ENCODE measurements at regions of chr4 and their contacts with region 1.

Region 1: GRCh38 chr4:182806259-182807252 is 110.6 kb downstream of the DCTD start:
- DNase-seq: peak; percentile 73
- H3K4me3 ChIP-seq: peak overlapping the region; percentile 18
- H3K27ac ChIP-seq: no peak overlapping the region
- H3K4me1 ChIP-seq: no peaks in the 10 kb centered on the region
- H3K27me3 ChIP-seq: no peaks in the 10 kb centered on the region
- CTCF ChIP-seq: peak; percentile 93

Region 2: DNA sequence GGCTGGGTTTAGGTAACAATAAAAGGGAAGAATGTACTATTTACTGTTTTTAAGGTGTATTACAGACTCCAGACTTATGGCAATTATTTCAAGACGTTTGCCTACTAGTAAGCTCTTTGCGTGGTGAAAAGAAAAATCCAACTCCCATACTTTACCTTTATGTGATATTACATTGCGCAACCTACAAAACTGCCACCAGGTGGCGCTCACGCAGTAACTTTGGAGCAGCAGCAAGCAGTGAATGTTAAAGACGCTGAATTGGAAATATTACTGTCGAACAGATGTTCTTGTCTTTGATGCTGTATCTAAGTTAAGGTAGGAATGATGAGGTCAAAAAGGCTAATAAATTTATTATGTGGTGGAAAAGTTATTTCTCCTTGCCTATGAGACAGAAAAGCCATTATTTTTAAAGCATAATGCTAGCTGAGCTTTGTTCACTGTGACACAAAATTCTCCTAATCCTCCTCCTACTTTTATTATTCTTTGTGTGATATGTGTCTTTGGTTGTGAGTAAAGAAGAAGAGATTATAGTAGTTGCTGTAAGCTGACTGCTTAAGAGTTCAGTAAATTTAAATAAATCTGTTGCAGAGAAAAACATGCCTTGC is 1663.2 kb before region 1 on chr4:
- CTCF ChIA-PET with region 1: no interaction called
- POLR2A ChIA-PET with region 1: no interaction called
- intact Hi-C with region 1: loop called (anchors 5 kb)
- DNase-seq: peak; percentile 79
- H3K4me3 ChIP-seq: no peak overlapping the region
- H3K27ac ChIP-seq: no peak overlapping the region
- H3K4me1 ChIP-seq: no peaks in the 10 kb centered on the region
- H3K27me3 ChIP-seq: peaks cover 24% of the 10 kb centered on the region
- CTCF ChIP-seq: peak; percentile 92

Region 3: DNA sequence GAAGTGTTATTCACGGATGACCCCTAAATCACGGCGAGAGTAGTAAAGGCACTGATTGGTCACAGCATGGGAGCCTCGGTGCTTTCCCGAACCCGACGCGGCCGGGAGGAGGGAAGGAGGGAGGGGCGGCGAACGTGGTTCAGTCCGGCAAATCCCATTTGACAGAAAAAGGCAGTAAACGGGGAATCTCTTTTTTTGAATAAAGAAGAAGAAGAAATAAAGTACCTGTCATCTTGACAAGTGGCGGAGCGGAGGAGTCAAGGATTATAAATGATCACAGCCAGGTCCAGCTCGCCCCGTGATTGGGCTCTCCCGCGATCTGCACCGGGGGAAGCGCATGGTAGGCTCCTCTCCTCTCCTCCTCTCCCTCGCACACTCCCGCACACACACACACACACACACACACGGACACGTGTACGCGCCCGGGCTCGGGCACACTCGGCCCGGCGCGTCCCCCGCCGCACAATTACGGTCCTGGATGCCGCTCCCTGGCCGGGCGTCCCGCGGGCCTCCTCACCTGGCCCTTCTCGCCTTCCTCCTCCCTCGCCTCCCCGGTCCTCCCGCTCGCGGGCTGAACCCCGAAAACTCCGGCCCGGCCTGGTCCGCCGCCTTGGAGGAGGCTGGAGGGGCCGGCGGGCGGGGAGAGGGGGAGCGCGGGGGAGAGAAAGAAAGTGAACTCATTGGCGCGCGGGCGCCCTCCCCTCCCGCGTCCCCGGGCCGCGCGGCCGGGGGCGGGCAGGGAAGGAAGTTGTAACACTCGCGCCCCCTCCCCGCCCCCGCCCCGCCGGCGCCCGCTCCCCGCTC is 662.5 kb before region 1 on chr4:
- CTCF ChIA-PET with region 1: no interaction called
- POLR2A ChIA-PET with region 1: no interaction called
- intact Hi-C with region 1: loop called (anchors 10 kb)
- DNase-seq: peak; percentile 80
- H3K4me3 ChIP-seq: peak overlapping the region; percentile 85
- H3K27ac ChIP-seq: peak overlapping the region; percentile 78
- H3K4me1 ChIP-seq: peaks cover 15% of the 10 kb centered on the region
- H3K27me3 ChIP-seq: peaks cover 4% of the 10 kb centered on the region
- CTCF ChIP-seq: no peak

Region 4: DNA sequence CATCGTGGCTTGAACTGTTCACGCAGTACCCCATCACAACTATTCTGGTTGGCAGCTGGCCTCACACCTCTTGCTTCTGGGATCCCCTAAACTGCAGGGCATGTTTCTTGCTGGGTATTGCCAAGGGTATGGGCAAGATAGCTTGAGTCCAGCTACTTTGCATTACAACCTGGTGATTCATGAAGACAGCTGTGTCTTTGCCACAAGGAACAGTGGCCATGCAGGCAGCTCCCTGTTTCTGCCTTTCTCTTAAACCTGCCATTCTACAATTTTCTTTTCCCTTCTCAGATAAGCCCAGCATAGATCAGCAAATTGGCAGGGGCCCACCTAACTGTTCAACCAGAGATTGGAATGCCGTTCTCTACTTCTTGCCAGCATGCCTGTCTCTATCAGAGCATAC is 520.5 kb before region 1 on chr4:
- CTCF ChIA-PET with region 1: no interaction called
- POLR2A ChIA-PET with region 1: no interaction called
- intact Hi-C with region 1: no loop called
- DNase-seq: no peak
- H3K4me3 ChIP-seq: no peak overlapping the region
- H3K27ac ChIP-seq: no peak overlapping the region
- H3K4me1 ChIP-seq: no peaks in the 10 kb centered on the region
- H3K27me3 ChIP-seq: no peaks in the 10 kb centered on the region
- CTCF ChIP-seq: no peak

Region 5: DNA sequence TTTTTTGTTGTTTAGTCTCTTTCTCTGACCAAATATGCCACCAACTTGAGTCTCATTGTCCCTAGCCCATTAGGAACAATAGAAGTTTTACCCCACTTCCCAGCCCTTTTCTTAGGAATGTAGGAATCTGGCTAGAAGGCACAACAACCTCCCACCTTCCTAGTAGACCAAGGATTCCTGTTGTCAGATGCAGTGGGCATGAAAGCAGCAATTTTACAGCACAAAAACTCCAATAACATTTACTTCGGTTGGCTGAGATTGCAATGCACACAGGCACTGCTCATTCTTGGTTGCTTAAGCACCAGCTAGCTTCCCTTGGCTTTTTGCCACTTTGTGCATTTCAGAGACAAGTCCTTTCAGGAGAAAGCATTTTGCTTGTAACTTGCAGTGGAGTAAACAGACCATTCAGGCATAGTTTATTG is 250.5 kb before region 1 on chr4:
- CTCF ChIA-PET with region 1: no interaction called
- POLR2A ChIA-PET with region 1: no interaction called
- intact Hi-C with region 1: loop called (anchors 2 kb)
- DNase-seq: peak; percentile 81
- H3K4me3 ChIP-seq: no peak overlapping the region
- H3K27ac ChIP-seq: no peak overlapping the region
- H3K4me1 ChIP-seq: peaks cover 29% of the 10 kb centered on the region
- H3K27me3 ChIP-seq: no peaks in the 10 kb centered on the region
- CTCF ChIP-seq: no peak

Region 6: GRCh38 chr4:183261953-183262775 is 455.6 kb after region 1 on chr4:
- CTCF ChIA-PET with region 1: no interaction called
- POLR2A ChIA-PET with region 1: no interaction called
- intact Hi-C with region 1: loop called (anchors 5 kb)
- DNase-seq: peak; percentile 89
- H3K4me3 ChIP-seq: no peak overlapping the region
- H3K27ac ChIP-seq: no peak overlapping the region
- H3K4me1 ChIP-seq: peaks cover 26% of the 10 kb centered on the region
- H3K27me3 ChIP-seq: no peaks in the 10 kb centered on the region
- CTCF ChIP-seq: peak; percentile 78